Heart left ventricle (tissue), 16 donors: ENCODE measurements at regions of chr10 and their contacts with region 1.

Region 1: DNA sequence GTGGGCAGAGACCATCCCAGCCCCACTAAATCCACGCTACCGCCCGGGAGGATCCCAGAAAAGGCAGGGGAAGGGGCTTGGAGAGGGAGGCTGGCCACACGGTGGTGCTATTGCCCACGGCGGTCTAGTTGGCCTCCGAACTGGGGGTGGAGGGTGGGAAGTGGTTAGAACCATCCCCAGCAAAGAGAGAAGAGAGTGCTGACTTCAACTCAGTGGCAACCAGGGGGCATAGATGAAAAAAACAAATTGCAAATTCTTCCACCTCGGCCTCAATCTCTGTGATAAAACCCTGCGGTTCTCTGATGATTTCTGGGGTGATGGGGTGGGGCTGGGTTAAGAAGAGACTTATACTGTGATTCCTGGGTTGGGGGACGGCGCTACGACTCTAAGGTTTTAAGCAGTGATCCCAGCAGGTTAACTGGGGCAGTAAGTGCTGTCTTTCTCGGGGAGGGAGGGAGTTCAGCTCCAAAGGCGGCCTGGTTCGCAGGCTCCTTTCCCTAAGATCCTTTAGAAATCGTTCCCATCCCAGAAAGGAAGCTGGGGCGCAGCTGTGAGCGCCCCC is 154.5 kb upstream of the LYZL2 start:
- DNase-seq: peak; percentile 88 to 93 (median 90)
- ATAC-seq: peak; percentile 80 to 86 (median 80)
- H3K4me3 ChIP-seq: peak overlapping the region; percentile 61 to 89 (median 76)
- H3K27ac ChIP-seq: peak overlapping the region; percentile 91 to 99 (median 98)
- H3K4me1 ChIP-seq: peaks cover 0 to 46% (median 18%) of the 10 kb centered on the region in 12 donors
- H3K27me3 ChIP-seq: no peaks in the 10 kb centered on the region
- CTCF ChIP-seq: peak; percentile 75 to 89 (median 86)
- POLR2A ChIP-seq: no peak

Region 2: DNA sequence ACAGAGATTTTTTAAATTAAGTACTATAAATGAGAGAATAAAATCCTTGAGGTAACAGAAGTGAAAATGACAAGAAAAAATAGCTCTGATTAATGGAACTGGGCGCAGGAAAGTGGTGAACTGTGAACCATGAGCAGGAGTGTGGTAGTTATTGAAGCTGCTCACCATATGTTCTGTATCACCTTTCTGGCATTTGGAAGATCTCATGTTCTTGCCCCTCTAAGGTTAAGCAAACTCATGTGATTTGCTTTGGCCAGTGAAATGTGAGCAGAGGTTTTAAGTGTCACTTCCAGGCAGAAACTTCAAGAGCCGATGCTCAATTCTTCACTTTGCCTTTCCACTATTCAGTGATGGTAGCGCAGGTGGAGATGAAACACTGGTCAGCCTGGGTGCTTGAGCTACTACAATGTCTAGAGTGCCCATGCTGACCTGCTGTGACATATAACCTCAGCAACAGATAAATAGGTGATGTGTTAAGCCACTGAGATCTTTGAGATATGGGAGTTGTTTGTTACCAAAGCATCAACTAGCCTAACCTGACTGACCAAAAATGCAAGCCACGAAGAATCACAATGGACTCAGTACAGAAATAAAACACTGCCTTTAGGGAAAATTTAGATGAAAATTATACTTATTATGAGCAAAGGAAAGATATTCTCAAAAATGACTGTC is 453.4 kb before region 1 on chr10:
- intact Hi-C with region 1: no loop called
- DNase-seq: no peak
- ATAC-seq: no peak
- H3K4me3 ChIP-seq: no peak overlapping the region
- H3K27ac ChIP-seq: no peak overlapping the region
- H3K4me1 ChIP-seq: no peaks in the 10 kb centered on the region
- H3K27me3 ChIP-seq: no peaks in the 10 kb centered on the region
- CTCF ChIP-seq: no peak
- POLR2A ChIP-seq: no peak

Region 3: DNA sequence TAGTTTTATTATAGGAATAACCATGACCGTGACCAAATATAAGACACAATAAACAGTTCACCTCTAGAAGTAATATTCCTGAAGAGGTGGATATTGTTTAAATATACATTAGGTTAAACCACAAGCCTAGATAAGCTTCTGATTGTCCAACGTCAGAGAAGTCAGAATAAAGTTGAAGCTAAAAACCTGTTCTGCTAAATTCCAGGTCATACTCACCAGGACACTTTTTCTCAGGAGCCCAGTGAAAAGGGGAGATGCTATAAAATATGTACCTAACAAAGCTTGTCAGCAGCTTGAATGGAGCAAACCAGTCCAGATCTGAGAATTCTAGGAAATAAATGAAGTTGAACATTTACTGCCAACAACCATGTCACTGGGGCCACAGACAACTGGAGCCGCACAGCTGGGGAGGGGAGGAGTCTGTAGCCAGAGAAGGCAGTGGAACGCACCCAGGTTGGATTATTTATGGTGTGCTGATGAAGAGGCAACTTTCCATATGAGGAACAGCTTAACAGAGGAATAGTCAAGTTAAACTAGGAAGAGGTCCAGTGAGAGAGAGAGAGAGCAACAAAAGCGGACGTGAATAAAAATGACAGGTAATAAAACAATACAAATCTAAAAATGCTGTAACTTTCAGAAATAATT is 56.5 kb after region 1 on chr10:
- intact Hi-C with region 1: no loop called
- DNase-seq: peak in 1 of 5 donors; percentile 28
- ATAC-seq: peak in 2 of 4 donors; percentile 62 to 64
- H3K4me3 ChIP-seq: no peak overlapping the region
- H3K27ac ChIP-seq: peak overlapping the region in 1 of 12 donors; percentile 60
- H3K4me1 ChIP-seq: peaks cover 0 to 19% (median 2%) of the 10 kb centered on the region in 12 donors
- H3K27me3 ChIP-seq: no peaks in the 10 kb centered on the region
- CTCF ChIP-seq: no peak
- POLR2A ChIP-seq: no peak

Region 4: GRCh38 chr10:30865141-30865926 is 81.3 kb after region 1 on chr10:
- intact Hi-C with region 1: no loop called
- DNase-seq: no peak
- ATAC-seq: peak in 1 of 4 donors; percentile 57
- H3K4me3 ChIP-seq: no peak overlapping the region
- H3K27ac ChIP-seq: peak overlapping the region in 1 of 12 donors; percentile 13
- H3K4me1 ChIP-seq: peaks cover 0 to 39% (median 0%) of the 10 kb centered on the region in 12 donors
- H3K27me3 ChIP-seq: no peaks in the 10 kb centered on the region
- CTCF ChIP-seq: no peak
- POLR2A ChIP-seq: no peak

Region 5: DNA sequence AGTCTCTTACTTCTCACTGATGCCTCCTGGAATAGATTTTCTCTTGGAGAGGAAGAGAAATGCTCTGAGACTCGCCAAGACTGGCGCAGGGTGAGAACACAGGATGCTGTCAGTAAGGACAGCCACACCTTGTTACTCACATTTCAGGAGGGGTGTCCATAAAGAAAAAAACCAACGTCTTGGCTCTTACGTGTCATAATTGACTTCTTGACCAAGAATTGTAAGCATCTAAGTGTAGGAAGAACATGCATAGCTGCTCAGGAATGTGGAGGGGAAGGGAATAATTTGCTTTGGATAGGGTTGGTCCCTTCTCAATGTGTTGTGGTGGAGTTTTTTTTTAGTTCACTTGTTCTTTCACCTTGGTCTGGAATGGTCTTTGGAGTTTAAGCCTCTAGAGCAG is 291.4 kb after region 1 on chr10:
- intact Hi-C with region 1: loop called in 2 of 10 experiments (anchors 5 kb)
- DNase-seq: no peak
- ATAC-seq: peak in 3 of 4 donors; percentile 35 to 37 (median 36)
- H3K4me3 ChIP-seq: no peak overlapping the region
- H3K27ac ChIP-seq: peak overlapping the region in 5 of 12 donors; percentile 16 to 56 (median 38)
- H3K4me1 ChIP-seq: peaks cover 0 to 49% (median 7%) of the 10 kb centered on the region in 12 donors
- H3K27me3 ChIP-seq: no peaks in the 10 kb centered on the region
- CTCF ChIP-seq: no peak
- POLR2A ChIP-seq: no peak

Region 6: GRCh38 chr10:31133628-31134302 is 349.7 kb after region 1 on chr10:
- intact Hi-C with region 1: loop called in 2 of 10 experiments (anchors 5 to 10 kb)
- DNase-seq: peak; percentile 88 to 92 (median 90)
- ATAC-seq: peak; percentile 88 to 94 (median 92)
- H3K4me3 ChIP-seq: peak overlapping the region; percentile 1 to 66 (median 50)
- H3K27ac ChIP-seq: peak overlapping the region; percentile 52 to 95 (median 88)
- H3K4me1 ChIP-seq: peaks cover 0 to 56% (median 18%) of the 10 kb centered on the region in 12 donors
- H3K27me3 ChIP-seq: no peaks in the 10 kb centered on the region
- CTCF ChIP-seq: no peak
- POLR2A ChIP-seq: peak in 1 of 2 donors; percentile 51

Region 7: GRCh38 chr10:31490858-31491504 is 707.0 kb after region 1 on chr10:
- intact Hi-C with region 1: loop called in 9 of 10 experiments (anchors 2 to 10 kb)
- DNase-seq: no peak
- ATAC-seq: peak in 3 of 4 donors; percentile 53 to 73 (median 53)
- H3K4me3 ChIP-seq: no peak overlapping the region
- H3K27ac ChIP-seq: no peak overlapping the region
- H3K4me1 ChIP-seq: peaks cover 0 to 4% (median 0%) of the 10 kb centered on the region in 12 donors
- H3K27me3 ChIP-seq: no peaks in the 10 kb centered on the region
- CTCF ChIP-seq: peak; percentile 38 to 70 (median 57)
- POLR2A ChIP-seq: no peak

Region 8: GRCh38 chr10:31620226-31621151 is 836.5 kb after region 1 on chr10:
- intact Hi-C with region 1: loop called in 1 of 10 experiments (anchors 10 kb)
- DNase-seq: peak; percentile 78 to 86 (median 83)
- ATAC-seq: peak; percentile 36 to 78 (median 44)
- H3K4me3 ChIP-seq: no peak overlapping the region
- H3K27ac ChIP-seq: peak overlapping the region in 11 of 12 donors; percentile 6 to 82 (median 69)
- H3K4me1 ChIP-seq: peaks cover 0 to 62% (median 36%) of the 10 kb centered on the region in 12 donors
- H3K27me3 ChIP-seq: no peaks in the 10 kb centered on the region
- CTCF ChIP-seq: peak in 11 of 12 donors; percentile 25 to 57 (median 33)
- POLR2A ChIP-seq: no peak

Region 9: GRCh38 chr10:31770307-31770902 is 986.4 kb after region 1 on chr10:
- intact Hi-C with region 1: loop called in 2 of 10 experiments (anchors 5 kb)
- DNase-seq: peak in 2 of 5 donors; percentile 45 to 57
- ATAC-seq: peak in 3 of 4 donors; percentile 49 to 81 (median 62)
- H3K4me3 ChIP-seq: no peak overlapping the region
- H3K27ac ChIP-seq: peak overlapping the region in 2 of 12 donors; percentile 21 to 39
- H3K4me1 ChIP-seq: peaks cover 0 to 14% (median 2%) of the 10 kb centered on the region in 12 donors
- H3K27me3 ChIP-seq: no peaks in the 10 kb centered on the region
- CTCF ChIP-seq: peak; percentile 70 to 89 (median 81)
- POLR2A ChIP-seq: no peak